Head of caudate nucleus (tissue), 42 donors: ENCODE measurements at regions of chr5 and their contacts with region 1.

Region 1: DNA sequence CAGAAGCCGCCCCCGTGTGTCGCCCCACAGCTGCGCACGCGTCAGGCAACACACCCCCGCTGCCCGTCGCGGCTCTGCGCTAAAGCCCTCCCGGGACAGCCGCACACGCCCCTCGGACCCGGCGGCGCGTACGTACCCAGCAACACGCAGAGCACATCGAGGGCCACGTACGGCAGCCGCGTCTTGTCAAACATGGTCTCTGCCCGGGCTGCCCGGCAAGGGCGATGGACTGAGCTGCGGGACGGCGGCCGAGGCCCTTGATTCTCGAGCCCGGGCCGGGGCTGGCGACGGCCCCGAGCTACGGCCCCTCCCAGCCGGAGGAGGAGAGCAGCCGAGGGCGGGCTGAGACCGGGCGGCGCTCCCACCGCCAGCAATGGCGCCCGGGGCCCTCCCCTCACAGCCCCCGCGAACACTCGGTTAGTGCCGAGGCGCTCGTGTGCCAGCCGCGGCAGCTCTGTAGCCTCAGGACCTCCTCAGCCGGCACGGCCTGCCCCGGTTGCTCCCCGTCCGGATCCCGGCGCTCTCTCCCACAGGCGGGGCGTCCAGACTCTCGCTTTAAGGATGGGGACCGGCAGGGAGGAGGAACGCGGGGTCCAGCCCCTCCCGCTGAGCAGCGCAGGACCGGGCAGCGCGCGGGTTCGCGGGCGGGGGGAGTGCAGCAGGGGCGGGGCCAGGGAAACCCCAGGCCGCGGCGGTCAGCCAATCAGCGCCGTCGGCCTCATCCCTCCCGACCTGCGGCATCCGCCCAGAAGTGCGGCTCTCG is at the start of gene PLPP1:
- DNase-seq: peak; percentile 83 to 98 (median 96)

Region 2: GRCh38 chr5:55440188-55440646 is 94.4 kb before region 1 on chr5:
- intact Hi-C with region 1: loop called (anchors 10 kb)
- DNase-seq: peak in 8 of 42 donors; percentile 12 to 63 (median 38)

Region 3: DNA sequence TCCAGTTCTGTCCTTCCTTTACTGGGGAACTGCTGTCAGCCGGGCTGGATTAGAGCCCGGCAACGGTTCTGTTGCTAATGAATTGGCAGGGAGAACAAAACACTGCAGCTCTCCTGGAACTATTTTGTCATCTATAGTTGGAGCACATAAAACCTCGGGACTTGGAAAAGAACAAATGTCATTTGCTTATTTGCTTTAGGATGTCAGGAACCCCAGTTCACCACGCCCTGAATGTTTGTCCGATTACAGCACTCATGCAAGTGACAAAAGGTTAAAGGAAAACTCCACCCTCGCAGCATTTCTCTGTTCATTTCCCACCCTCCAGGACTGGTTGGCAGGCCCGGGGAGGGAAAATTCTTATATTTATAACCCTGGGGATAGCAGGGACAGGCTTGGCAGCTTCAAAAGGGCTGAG is 66.6 kb after region 1 on chr5:
- intact Hi-C with region 1: loop called (anchors 2 kb)
- DNase-seq: peak; percentile 35 to 89 (median 72)

Region 4: GRCh38 chr5:56026863-56027300 is 492.3 kb after region 1 on chr5:
- intact Hi-C with region 1: no loop called
- DNase-seq: no peak